ENCODE measurements at regions of chr1 and their contacts with region 1.

Region 1: DNA sequence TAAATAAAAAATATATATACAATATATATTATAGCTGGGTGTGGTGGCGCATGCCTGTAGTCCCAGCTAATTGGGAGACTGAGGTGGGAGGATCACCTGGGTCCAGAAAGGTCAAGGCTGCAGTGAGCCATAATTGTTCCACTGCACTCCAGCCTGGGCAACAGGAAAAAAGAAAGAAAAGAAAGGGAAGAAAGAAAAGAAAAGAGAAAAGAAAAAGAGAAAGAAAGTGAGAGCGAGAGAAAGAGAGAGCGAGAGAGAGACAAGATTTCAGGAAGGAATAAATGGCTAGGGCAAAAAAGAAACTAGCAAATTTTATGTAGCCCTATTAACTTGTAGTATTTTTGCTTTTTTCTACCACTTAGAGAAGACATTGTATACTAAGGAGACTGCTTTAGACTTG is 6.2 kb downstream of the NRAS start:
- DNase-seq: no peak
- ATAC-seq: no peak
- H3K4me3 ChIP-seq: no peak overlapping the region
- H3K27ac ChIP-seq: peak overlapping the region in 1 of 4 donors; percentile 28
- H3K4me1 ChIP-seq: peaks cover 14 to 21% of the 10 kb centered on the region in 2 donors
- H3K27me3 ChIP-seq: no peaks in the 10 kb centered on the region
- CTCF ChIP-seq: no peak
- POLR2A ChIP-seq: no peak

Region 2: GRCh38 chr1:114397601-114398000 is 312.7 kb before region 1 on chr1:
- in situ Hi-C with region 1: no loop called
- intact Hi-C with region 1: no loop called
- DNase-seq: no peak
- ATAC-seq: no peak
- H3K4me3 ChIP-seq: no peak overlapping the region
- H3K27ac ChIP-seq: no peak overlapping the region
- H3K4me1 ChIP-seq: no peaks in the 10 kb centered on the region
- H3K27me3 ChIP-seq: no peaks in the 10 kb centered on the region
- CTCF ChIP-seq: no peak
- POLR2A ChIP-seq: no peak

Region 3: DNA sequence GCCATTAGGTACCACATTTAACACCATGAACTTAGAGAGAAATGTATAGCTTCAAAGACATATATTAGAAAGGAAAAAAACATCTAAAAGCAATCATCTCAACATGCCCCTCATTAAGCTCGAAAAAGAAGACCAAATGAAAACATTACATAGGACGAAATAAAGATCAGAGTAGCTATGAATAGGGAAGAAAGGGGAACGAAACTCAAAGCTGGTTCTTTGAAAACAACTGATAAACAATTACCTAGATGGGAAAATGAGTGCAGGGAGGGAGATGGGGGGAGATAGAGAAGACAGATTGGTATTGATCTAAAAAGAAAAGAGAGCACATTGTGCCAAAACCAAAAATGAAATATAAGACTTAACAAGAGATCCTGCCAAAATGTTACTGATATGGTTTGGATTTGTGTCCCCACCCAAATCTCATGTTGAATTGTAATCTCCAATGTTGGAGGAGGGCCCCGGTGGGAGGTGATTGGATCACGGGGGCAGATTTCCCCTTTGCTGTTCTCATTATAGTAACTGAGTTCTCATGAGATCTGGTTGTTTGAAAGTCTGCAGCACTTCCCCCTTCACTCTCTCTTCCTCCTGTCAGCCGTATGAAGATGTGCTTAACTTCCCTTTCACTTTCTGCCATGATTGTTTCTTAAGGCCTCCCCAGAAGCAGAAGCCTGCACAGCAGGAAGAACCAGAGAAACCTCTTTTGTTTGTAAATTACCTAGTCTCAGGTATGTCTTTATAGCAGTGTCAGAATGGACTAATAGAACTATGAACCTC is 227.9 kb before region 1 on chr1:
- in situ Hi-C with region 1: no loop called
- intact Hi-C with region 1: no loop called
- DNase-seq: no peak
- ATAC-seq: no peak
- H3K4me3 ChIP-seq: no peak overlapping the region
- H3K27ac ChIP-seq: no peak overlapping the region
- H3K4me1 ChIP-seq: peaks cover 0 to 8% of the 10 kb centered on the region in 2 donors
- H3K27me3 ChIP-seq: no peaks in the 10 kb centered on the region
- CTCF ChIP-seq: no peak
- POLR2A ChIP-seq: no peak

Region 4: DNA sequence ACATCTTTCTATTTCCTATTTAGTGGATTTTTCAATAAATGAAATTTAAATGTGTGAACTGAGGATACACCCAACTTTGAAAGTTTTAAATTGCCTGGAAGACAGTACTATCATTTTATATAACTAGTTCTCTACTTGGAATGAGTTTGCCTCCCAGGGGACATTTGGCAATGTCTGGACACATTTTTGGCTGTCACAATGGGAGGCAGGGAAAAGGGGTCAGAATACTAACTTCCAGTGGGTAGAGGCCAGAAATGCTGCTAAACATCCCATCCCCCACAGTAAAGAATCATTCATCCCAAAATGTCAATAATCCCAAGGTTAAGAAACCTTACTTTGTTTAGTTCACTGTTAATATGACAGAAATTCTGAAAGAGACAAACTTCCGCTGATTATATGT is 19.4 kb after region 1 on chr1:
- in situ Hi-C with region 1: no loop called
- intact Hi-C with region 1: loop called (anchors 2 kb)
- DNase-seq: no peak
- ATAC-seq: no peak
- H3K4me3 ChIP-seq: no peak overlapping the region
- H3K27ac ChIP-seq: peak overlapping the region; percentile 44 to 74 (median 66)
- H3K4me1 ChIP-seq: peaks cover 23 to 47% of the 10 kb centered on the region in 2 donors
- H3K27me3 ChIP-seq: no peaks in the 10 kb centered on the region
- CTCF ChIP-seq: no peak
- POLR2A ChIP-seq: no peak

Region 5: GRCh38 chr1:115041654-115042053 is 331.3 kb after region 1 on chr1:
- in situ Hi-C with region 1: no loop called
- intact Hi-C with region 1: no loop called
- DNase-seq: no peak
- ATAC-seq: no peak
- H3K4me3 ChIP-seq: no peak overlapping the region
- H3K27ac ChIP-seq: no peak overlapping the region
- H3K4me1 ChIP-seq: no peaks in the 10 kb centered on the region
- H3K27me3 ChIP-seq: no peaks in the 10 kb centered on the region
- CTCF ChIP-seq: no peak
- POLR2A ChIP-seq: no peak